H1 (cell line): ENCODE measurements at regions of chr20 and their contacts with region 1.

Region 1: DNA sequence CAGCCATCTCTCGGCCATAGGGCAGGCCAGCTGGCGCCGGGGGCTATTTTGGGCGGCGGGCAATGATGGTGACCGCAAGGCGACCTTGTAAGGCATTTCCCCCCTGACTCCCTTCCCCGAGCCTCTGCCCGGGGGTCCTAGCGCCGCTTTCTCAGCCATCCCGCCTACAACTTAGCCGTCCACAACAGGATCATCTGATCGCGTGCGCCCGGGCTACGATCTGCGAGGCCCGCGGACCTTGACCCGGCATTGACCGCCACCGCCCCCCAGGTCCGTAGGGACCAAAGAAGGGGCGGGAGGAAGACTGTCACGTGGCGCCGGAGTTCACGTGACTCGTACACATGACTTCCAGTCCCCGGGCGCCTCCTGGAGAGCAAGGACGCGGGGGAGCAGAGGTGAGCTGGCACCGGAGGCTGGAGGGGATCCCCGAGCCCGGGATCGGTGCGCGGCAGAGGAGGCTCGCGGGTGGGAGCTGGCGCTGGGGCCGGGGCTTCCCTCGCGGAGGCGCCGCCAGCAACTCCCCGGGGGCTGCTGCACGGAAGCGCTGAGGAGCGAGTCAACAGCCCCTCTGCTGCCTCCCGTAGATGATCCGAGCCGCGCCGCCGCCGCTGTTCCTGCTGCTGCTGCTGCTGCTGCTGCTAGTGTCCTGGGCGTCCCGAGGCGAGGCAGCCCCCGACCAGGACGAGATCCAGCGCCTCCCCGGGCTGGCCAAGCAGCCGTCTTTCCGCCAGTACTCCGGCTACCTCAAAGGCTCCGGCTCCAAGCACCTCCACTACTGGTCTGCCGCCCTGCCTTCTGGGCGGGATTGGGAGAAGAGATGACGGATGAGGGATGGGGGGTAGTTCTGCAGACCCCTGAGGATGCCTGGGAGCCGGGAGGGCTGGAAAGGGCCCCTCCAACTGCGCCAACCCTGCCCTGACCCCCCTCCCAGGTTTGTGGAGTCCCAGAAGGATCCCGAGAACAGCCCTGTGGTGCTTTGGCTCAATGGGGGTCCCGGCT is at the starts of genes CTSA and NEURL2:
- DNase-seq: peak; percentile 79 to 96
- H3K4me3 ChIP-seq: peak within 1 kb of the TSS; percentile 55 to 79 (median 74)
- H3K27ac ChIP-seq: peak within 1 kb of the TSS; percentile 38
- H3K4me1 ChIP-seq: peaks cover 0 to 10% (median 6%) of the 10 kb centered on the region in 4 experiments; a peak in 6 of 7 replicates
- H3K27me3 ChIP-seq: no peaks in the 10 kb centered on the region
- CTCF ChIP-seq: no peak
- EP300 ChIP-seq: peak in 1 of 2 experiments; percentile 91; a peak in 2 of 3 replicates
- POLR2A ChIP-seq: peak; percentile 43 to 69
- RAD21 ChIP-seq: peak in 1 of 2 experiments; percentile 1; a peak in 1 of 4 replicates
- total RNA-seq, gene CTSA: 49.7 and 52.5 TPM in 2 replicates
- total RNA-seq, gene NEURL2: 5.2 and 6.9 TPM in 2 replicates

Region 2: DNA sequence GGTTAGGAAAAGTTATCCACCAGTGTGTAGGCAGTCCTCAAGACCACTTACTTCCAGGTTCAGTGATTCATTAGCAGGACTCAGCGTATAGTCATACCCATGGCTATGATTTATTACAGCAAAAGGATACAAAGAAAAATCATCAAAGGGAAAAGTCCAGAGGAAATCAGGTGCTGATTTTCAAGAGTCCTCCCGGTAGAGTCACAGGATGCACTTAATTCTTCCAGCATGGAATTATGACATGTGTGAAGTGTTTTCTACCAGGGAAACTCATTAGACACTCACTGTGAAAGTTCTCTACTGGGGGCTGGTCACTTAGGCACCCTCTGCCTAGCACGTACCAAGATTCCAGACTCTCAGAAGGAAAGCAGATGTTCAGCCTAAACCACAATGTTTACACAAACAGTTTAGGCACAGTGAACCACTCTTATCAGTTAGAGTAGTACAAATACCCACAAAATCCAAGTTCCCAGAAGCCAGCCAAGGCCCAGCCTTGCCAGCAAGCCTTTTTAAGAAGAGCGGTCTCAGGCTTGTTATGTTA is 109.8 kb before region 1 on chr20:
- CTCF ChIA-PET with region 1: no interaction called
- POLR2A ChIA-PET with region 1: no interaction called
- DNase-seq: no peak
- H3K4me3 ChIP-seq: no peak overlapping the region
- H3K27ac ChIP-seq: no peak overlapping the region
- H3K4me1 ChIP-seq: no peaks in the 10 kb centered on the region
- H3K27me3 ChIP-seq: no peaks in the 10 kb centered on the region
- CTCF ChIP-seq: no peak
- EP300 ChIP-seq: no peak
- POLR2A ChIP-seq: no peak
- RAD21 ChIP-seq: no peak

Region 3: GRCh38 chr20:45823949-45824835 is 67.1 kb before region 1 on chr20:
- CTCF ChIA-PET with region 1: interaction called, 18 read pairs
- POLR2A ChIA-PET with region 1: interaction called, 15 read pairs
- DNase-seq: peak; percentile 53 to 77
- H3K4me3 ChIP-seq: peak overlapping the region in 3 of 4 experiments; percentile 5 to 44 (median 6); a peak in 4 of 8 replicates
- H3K27ac ChIP-seq: no peak overlapping the region
- H3K4me1 ChIP-seq: peaks cover 0 to 12% (median 5%) of the 10 kb centered on the region in 4 experiments; a peak in 6 of 7 replicates
- H3K27me3 ChIP-seq: peaks cover 0 to 12% (median 10%) of the 10 kb centered on the region in 4 experiments; a peak in 4 of 7 replicates
- CTCF ChIP-seq: peak; percentile 58 to 78 (median 72)
- EP300 ChIP-seq: no peak
- POLR2A ChIP-seq: 0 out of 3 replicates have a peak, but pooled peaks of 1 of the 2 experiments have one; percentile 42
- RAD21 ChIP-seq: peak; percentile 74 to 77

Region 4: GRCh38 chr20:45880988-45881788 is 10.1 kb before region 1 on chr20 and contains the start of gene ZSWIM1:
- CTCF ChIA-PET with region 1: interaction called, 14 read pairs
- POLR2A ChIA-PET with region 1: interaction called, 55 read pairs
- DNase-seq: peak; percentile 98 to 99
- H3K4me3 ChIP-seq: peak within 1 kb of the TSS; percentile 80 to 99 (median 90)
- H3K27ac ChIP-seq: peak within 1 kb of the TSS; percentile 69
- H3K4me1 ChIP-seq: no peaks in the 10 kb centered on the region
- H3K27me3 ChIP-seq: no peaks in the 10 kb centered on the region
- CTCF ChIP-seq: no peak
- EP300 ChIP-seq: no peak
- POLR2A ChIP-seq: peak; percentile 61 to 88
- RAD21 ChIP-seq: no peak
- total RNA-seq, gene ZSWIM1: 15.6 and 16.7 TPM in 2 replicates

Region 5: DNA sequence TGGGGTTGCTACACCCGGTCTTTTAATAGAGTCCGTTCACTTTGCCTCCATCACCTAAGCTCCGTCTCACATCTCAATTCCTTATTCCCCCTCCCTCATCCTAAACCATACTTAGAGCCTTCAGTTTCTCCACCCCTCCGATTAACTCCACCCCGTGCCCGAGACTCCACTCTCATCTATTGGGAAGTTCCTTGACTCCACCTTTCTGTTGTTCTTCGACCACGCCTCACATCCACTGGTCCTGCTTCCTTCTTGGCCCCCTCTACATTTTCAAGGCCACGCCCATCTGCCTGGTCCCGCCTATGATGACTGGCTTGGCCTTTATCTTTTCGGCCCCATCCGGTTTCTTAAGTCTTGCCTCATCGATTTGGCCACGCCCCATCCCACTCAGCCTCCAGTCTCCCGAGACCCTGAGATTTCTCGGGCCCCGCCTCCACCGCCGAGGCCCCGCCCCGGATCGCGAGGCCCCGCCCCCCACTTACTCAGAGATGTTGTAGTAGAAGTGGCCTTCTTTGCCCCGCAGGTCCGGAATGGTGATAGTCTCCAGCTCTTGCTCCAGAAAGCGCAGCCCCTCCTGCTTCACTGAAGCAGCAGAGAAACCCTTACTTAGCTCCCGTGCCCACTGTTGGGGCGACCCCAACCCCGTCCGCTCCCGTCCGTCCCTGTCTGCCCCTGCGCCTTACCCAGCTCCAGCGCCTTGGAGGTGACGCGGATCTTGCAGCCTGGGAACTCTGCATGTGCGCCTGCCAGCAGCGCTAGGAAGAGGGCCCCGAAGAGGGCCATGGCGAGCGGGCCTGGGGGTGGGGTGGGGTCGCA is 19.6 kb after region 1 on chr20:
- CTCF ChIA-PET with region 1: interaction called, 15 read pairs
- POLR2A ChIA-PET with region 1: interaction called, 172 read pairs
- DNase-seq: peak; percentile 99 to 100
- H3K4me3 ChIP-seq: peak overlapping the region; percentile 52 to 81 (median 70)
- H3K27ac ChIP-seq: peak overlapping the region; percentile 58; the same call in 1 of the 2 replicates
- H3K4me1 ChIP-seq: peaks cover 0 to 2% (median 0%) of the 10 kb centered on the region in 4 experiments; a peak in 3 of 7 replicates
- H3K27me3 ChIP-seq: no peaks in the 10 kb centered on the region
- CTCF ChIP-seq: no peak
- EP300 ChIP-seq: no peak
- POLR2A ChIP-seq: peak; percentile 59 to 68; a peak in 2 of 3 replicates
- RAD21 ChIP-seq: no peak

Region 6: DNA sequence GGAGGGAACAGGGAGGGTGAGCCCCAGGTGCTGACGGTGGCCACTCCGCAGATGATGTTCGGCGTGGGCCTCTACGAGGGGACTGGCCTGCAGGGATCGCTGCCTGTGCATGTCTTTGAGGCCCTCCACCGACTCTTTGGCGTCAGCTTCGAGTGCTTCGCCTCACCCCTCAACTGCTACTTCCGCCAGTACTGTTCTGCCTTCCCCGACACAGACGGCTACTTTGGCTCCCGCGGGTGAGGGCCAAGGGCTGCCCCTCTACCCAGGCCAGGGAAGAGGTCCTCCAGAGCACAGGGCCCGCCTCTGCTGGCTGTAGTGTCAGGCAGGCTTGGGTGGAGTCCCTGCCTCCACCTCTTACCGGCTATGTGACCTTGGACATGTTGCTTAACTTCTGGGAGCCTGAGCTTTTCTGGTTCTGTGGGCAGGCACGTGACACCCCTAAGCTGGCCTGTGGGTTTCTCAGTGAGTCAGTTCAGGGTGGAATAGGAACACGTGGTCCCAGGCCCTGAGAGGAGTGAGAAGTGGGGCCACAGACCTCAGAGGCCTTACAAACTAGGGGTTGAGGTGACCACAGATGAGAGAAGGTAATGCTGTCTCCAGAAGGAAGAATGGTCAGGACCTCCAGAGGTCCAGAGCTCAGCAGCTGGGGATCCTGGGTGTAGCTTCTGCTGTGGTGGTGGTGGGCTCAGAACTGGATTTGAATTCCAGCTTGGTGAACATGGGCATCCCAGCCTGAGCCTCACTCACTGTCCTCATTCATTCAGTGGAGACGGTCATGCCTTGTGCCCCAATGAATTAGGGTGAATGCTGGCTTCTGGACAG is 55.1 kb after region 1 on chr20:
- CTCF ChIA-PET with region 1: interaction called, 6 read pairs
- POLR2A ChIA-PET with region 1: interaction called, 40 read pairs
- DNase-seq: no peak
- H3K4me3 ChIP-seq: no peak overlapping the region
- H3K27ac ChIP-seq: no peak overlapping the region
- H3K4me1 ChIP-seq: no peaks in the 10 kb centered on the region
- H3K27me3 ChIP-seq: no peaks in the 10 kb centered on the region; a peak in 1 of 7 replicates
- CTCF ChIP-seq: no peak
- EP300 ChIP-seq: no peak
- POLR2A ChIP-seq: no peak
- RAD21 ChIP-seq: no peak

Region 7: GRCh38 chr20:45971675-45972499 is 80.6 kb after region 1 on chr20 and contains the start of gene ZNF335:
- CTCF ChIA-PET with region 1: interaction called, 40 read pairs
- POLR2A ChIA-PET with region 1: interaction called, 5 read pairs
- DNase-seq: peak; percentile 88 to 96
- H3K4me3 ChIP-seq: peak within 1 kb of the TSS; percentile 67 to 99 (median 82)
- H3K27ac ChIP-seq: peak within 1 kb of the TSS; percentile 100
- H3K4me1 ChIP-seq: peaks cover 0 to 8% (median 2%) of the 10 kb centered on the region in 4 experiments; a peak in 4 of 7 replicates
- H3K27me3 ChIP-seq: no peaks in the 10 kb centered on the region
- CTCF ChIP-seq: peak in 1 of 3 experiments; percentile 18; a peak in 1 of 4 replicates
- EP300 ChIP-seq: peak in 1 of 2 experiments; percentile 99; a peak in 2 of 3 replicates
- POLR2A ChIP-seq: peak in 1 of 2 experiments; percentile 88; a peak in 2 of 3 replicates
- RAD21 ChIP-seq: no peak
- total RNA-seq, gene ZNF335: 14.6 and 15.9 TPM in 2 replicates